ENCODE measurements at regions of chr5 and their contacts with region 1.

Region 1: DNA sequence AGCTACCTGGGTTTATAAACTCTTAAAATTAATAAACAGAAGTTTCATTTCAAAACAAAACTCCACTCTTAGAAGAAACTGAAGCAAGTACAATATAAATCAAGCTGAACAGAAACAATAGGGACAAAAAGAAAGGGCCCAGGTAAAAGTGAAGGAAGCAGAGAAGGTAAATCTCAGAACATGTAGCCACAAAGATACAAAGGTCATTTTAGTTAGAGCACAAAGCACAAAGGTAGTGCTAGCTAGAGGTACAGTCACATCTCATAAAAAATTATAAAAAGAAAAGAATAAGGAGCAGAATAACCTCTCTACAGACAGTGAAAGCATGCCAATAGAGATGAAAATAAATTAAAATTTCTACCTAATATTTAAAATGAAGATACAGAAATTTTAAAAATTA is 90.4 kb upstream of the C5orf63 start:
- DNase-seq: no peak
- ATAC-seq: no peak
- H3K4me3 Mint-ChIP-seq: no peak overlapping the region
- H3K27ac Mint-ChIP-seq: no peak overlapping the region
- H3K4me1 Mint-ChIP-seq: no peaks in the 10 kb centered on the region
- H3K27me3 Mint-ChIP-seq: peaks cover 8% of the 10 kb centered on the region

Region 2: GRCh38 chr5:127280491-127281220 is 116.9 kb after region 1 on chr5:
- CTCF ChIA-PET with region 1: no interaction called
- POLR2A ChIA-PET with region 1: no interaction called
- intact Hi-C with region 1: no loop called
- DNase-seq: no peak
- ATAC-seq: no peak
- H3K4me3 Mint-ChIP-seq: no peak overlapping the region
- H3K27ac Mint-ChIP-seq: no peak overlapping the region
- H3K4me1 Mint-ChIP-seq: no peaks in the 10 kb centered on the region
- H3K27me3 Mint-ChIP-seq: peaks cover 11% of the 10 kb centered on the region

Region 3: GRCh38 chr5:127305493-127305892 is 141.7 kb after region 1 on chr5:
- CTCF ChIA-PET with region 1: no interaction called
- POLR2A ChIA-PET with region 1: interaction called, 11 read pairs
- intact Hi-C with region 1: no loop called
- DNase-seq: no peak
- ATAC-seq: no peak
- H3K4me3 Mint-ChIP-seq: no peak overlapping the region
- H3K27ac Mint-ChIP-seq: no peak overlapping the region
- H3K4me1 Mint-ChIP-seq: no peaks in the 10 kb centered on the region
- H3K27me3 Mint-ChIP-seq: peaks cover 4% of the 10 kb centered on the region